Calu3 (cell line): ENCODE measurements at regions of chr2 and their contacts with region 1.

Region 1: GRCh38 chr2:167212014-167212648 is 323.9 kb downstream of the XIRP2 start:
- DNase-seq: peak; percentile 71
- H3K4me3 Mint-ChIP-seq: no peak overlapping the region
- H3K27ac Mint-ChIP-seq: no peak overlapping the region
- H3K4me1 Mint-ChIP-seq: no peaks in the 10 kb centered on the region
- H3K27me3 Mint-ChIP-seq: no peaks in the 10 kb centered on the region
- CTCF ChIP-seq: peak; percentile 60

Region 2: GRCh38 chr2:166545473-166545872 is 666.7 kb before region 1 on chr2:
- CTCF ChIA-PET with region 1: no interaction called
- intact Hi-C with region 1: no loop called
- DNase-seq: no peak
- H3K4me3 Mint-ChIP-seq: no peak overlapping the region
- H3K27ac Mint-ChIP-seq: no peak overlapping the region
- H3K4me1 Mint-ChIP-seq: no peaks in the 10 kb centered on the region
- H3K27me3 Mint-ChIP-seq: no peaks in the 10 kb centered on the region
- CTCF ChIP-seq: no peak

Region 3: DNA sequence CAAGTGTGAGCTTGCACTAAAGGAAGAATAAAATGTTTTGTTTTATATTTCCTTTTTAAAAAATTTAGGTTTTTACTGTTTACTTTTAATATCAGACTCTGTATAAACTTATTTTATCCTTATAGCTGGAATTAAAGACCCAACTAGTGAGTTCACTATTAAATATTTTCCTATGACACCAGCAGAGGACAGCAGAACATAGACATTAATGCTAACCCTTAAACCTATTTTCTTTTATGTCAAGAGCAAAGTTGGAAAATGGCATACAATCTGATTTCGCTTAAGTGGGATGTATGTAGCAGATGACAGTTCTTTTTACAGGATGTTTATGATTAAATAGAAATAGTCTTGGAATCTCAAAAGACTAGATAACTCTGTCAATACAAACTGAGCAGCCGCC is 512.1 kb before region 1 on chr2:
- CTCF ChIA-PET with region 1: interaction called, 4 read pairs
- intact Hi-C with region 1: loop called (anchors 1 kb)
- DNase-seq: no peak
- H3K4me3 Mint-ChIP-seq: no peak overlapping the region
- H3K27ac Mint-ChIP-seq: no peak overlapping the region
- H3K4me1 Mint-ChIP-seq: no peaks in the 10 kb centered on the region
- H3K27me3 Mint-ChIP-seq: no peaks in the 10 kb centered on the region
- CTCF ChIP-seq: no peak

Region 4: GRCh38 chr2:166895243-166895642 is 316.9 kb before region 1 on chr2:
- CTCF ChIA-PET with region 1: no interaction called
- intact Hi-C with region 1: loop called (anchors 2 kb)
- DNase-seq: no peak
- H3K4me3 Mint-ChIP-seq: no peak overlapping the region
- H3K27ac Mint-ChIP-seq: no peak overlapping the region
- H3K4me1 Mint-ChIP-seq: no peaks in the 10 kb centered on the region
- H3K27me3 Mint-ChIP-seq: no peaks in the 10 kb centered on the region
- CTCF ChIP-seq: no peak

Region 5: GRCh38 chr2:166957686-166958085 is 254.4 kb before region 1 on chr2:
- CTCF ChIA-PET with region 1: no interaction called
- intact Hi-C with region 1: loop called (anchors 5 kb)
- DNase-seq: no peak
- H3K4me3 Mint-ChIP-seq: peak overlapping the region; percentile 24
- H3K27ac Mint-ChIP-seq: peak overlapping the region; percentile 75
- H3K4me1 Mint-ChIP-seq: peaks cover 17% of the 10 kb centered on the region
- H3K27me3 Mint-ChIP-seq: no peaks in the 10 kb centered on the region
- CTCF ChIP-seq: no peak

Region 6: GRCh38 chr2:167127135-167127534 is 85.0 kb before region 1 on chr2:
- CTCF ChIA-PET with region 1: no interaction called
- intact Hi-C with region 1: loop called (anchors 1 kb)
- DNase-seq: no peak
- H3K4me3 Mint-ChIP-seq: no peak overlapping the region
- H3K27ac Mint-ChIP-seq: no peak overlapping the region
- H3K4me1 Mint-ChIP-seq: peaks cover 8% of the 10 kb centered on the region
- H3K27me3 Mint-ChIP-seq: no peaks in the 10 kb centered on the region
- CTCF ChIP-seq: peak; percentile 53

Region 7: GRCh38 chr2:167689444-167689843 is 477.3 kb after region 1 on chr2:
- CTCF ChIA-PET with region 1: no interaction called
- intact Hi-C with region 1: no loop called
- DNase-seq: no peak
- H3K4me3 Mint-ChIP-seq: no peak overlapping the region
- H3K27ac Mint-ChIP-seq: no peak overlapping the region
- H3K4me1 Mint-ChIP-seq: peaks cover under 1% of the 10 kb centered on the region
- H3K27me3 Mint-ChIP-seq: no peaks in the 10 kb centered on the region
- CTCF ChIP-seq: no peak